Activated CD4-positive, alpha-beta T cell treated with anti-CD3 and anti-CD28 coated beads for 36 hours (primary cell): ENCODE measurements at regions of chr7 and their contacts with region 1.

Region 1: DNA sequence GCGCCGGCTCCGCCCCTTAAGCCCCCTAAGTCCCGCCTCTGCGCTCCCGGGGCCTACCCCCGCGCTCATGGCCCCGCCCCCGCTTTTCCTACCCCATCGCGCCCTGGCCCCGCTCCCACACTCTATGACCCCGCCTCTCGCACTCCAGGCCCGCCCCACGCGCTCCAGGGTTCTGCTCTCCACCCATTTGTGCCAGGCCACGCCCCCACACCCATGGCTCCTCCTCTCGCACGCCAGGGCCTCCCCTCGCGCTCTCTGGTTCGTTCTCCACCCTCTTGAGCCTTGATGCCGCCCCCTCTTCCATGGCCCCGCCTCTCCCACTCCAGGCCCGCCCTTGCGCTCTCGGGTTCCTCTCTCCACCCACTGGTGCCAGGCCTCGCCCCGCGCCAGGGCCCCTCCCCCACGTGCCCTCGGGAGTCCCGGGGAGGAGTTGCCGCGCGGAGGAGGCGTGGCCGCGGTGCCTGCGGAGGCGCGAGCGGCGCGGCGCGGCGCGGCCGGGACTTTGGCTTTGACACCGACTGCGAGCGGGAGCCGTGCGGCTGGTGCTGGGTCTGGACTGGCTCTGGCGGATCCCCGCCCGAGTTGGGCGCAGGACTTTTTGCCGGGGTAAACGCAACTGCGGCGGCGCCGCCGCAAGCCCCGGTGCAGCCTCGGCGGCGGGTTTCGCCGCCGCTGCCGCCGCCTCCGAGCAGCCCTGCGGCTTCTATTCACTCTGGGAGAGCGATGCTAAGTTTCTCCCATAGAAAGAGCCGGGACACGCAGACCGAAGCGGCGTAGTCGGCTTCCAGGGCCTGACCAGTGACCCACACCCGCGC is at the start of gene EEPD1:
- DNase-seq: peak; percentile 100
- ATAC-seq: peak; percentile 98
- H3K4me3 Mint-ChIP-seq: peak within 1 kb of the TSS; percentile 71
- H3K27ac Mint-ChIP-seq: peak within 1 kb of the TSS; percentile 43
- H3K4me1 Mint-ChIP-seq: peaks cover 29% of the 10 kb centered on the region
- H3K27me3 Mint-ChIP-seq: no peaks in the 10 kb centered on the region
- total RNA-seq, gene EEPD1: 1.3 TPM

Region 2: DNA sequence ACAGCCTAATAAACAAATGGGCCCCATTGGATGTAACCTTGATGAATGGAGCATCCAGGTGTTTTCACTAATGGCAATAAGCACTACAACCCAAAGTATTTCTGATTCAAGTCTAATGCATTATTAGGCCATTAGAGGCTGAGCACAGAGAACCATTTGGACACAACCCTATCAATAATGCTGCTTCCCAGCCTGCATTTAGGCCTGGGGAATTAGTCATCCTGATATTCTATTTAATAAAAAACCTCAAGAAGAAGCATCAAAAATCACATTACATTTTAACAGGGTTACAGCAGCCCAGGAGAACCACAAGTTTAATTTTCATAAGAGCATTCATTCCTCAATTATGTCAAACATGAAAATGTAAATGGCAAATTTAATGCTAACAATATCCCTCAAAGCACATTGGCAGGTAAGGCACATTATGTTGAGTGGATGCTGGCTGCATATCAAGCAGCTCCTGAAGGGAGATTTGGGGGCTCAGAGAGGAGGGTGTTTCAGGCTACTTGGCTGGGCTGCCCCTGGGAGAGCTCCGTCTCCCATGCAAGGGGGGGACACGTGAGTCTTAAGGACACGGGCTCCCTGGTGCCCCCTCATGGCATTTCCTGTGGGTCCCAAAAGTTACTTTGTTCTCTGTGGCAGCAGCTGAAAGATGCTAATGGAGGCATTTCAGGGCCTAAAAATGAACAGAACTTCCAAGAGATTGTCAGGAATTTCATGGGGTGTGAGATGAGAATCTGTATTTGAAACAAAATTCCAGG is 601.5 kb before region 1 on chr7:
- CTCF ChIA-PET with region 1: no interaction called
- POLR2A ChIA-PET with region 1: no interaction called
- intact Hi-C with region 1: no loop called
- DNase-seq: no peak
- ATAC-seq: no peak
- H3K4me3 Mint-ChIP-seq: no peak overlapping the region
- H3K27ac Mint-ChIP-seq: no peak overlapping the region
- H3K4me1 Mint-ChIP-seq: no peaks in the 10 kb centered on the region
- H3K27me3 Mint-ChIP-seq: peaks cover 5% of the 10 kb centered on the region

Region 3: DNA sequence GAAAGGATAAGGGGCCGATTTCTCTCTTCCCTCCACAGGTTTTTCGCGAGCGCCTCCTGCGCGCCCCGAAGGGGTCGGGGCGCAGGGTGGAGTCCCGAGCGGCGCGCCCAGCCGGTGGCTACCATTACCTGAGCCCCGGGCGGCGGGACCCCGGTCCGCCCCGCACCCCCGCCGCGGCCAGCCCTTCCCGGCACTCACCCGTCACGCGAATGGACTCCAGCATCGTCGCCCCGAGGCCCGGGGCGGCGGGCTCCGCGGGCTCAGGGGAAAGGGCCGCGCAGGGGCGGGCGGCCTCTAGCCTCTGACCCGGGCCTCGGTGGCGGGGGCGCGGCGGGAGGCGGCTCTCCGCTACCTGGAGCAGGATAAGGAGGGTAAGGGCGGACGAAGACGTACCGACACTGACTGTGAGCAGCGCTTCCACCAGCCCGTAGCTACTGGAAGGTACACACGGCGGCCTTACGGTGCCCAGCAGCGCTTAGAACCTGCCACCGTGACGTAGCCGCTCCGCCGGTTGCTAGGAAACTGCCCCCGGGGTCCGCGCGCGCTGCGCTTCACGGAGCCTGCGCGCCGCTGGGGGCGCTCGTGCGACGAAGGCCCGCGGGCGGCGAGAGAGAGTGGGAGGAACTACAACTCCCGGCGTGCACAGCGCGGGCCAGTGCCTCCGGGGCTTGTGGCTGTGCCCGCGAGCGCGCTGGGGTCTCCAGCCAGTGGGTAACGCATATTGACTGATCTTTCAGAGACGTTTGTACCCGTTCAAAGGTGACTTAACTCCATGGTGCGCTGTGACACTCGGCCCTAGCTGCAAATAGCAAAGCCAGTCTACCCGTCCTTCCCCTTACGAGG is 214.0 kb after region 1 on chr7:
- CTCF ChIA-PET with region 1: interaction called, 3 read pairs
- POLR2A ChIA-PET with region 1: no interaction called
- intact Hi-C with region 1: loop called (anchors 1 to 2 kb)
- DNase-seq: peak; percentile 95
- ATAC-seq: peak; percentile 98
- H3K4me3 Mint-ChIP-seq: peak overlapping the region; percentile 83
- H3K27ac Mint-ChIP-seq: peak overlapping the region; percentile 19
- H3K4me1 Mint-ChIP-seq: no peaks in the 10 kb centered on the region
- H3K27me3 Mint-ChIP-seq: peaks cover 10% of the 10 kb centered on the region